ENCODE measurements at regions of chr10 and their contacts with region 1.

Region 1: GRCh38 chr10:30420266-30420665 is 13.7 kb upstream of the MAP3K8 start:
- DNase-seq: no peak
- ATAC-seq: no peak
- H3K4me3 ChIP-seq: no peak overlapping the region
- H3K4me3 Mint-ChIP-seq: no peak overlapping the region
- H3K27ac ChIP-seq: no peak overlapping the region
- H3K27ac Mint-ChIP-seq: no peak overlapping the region
- H3K4me1 ChIP-seq: peaks cover 7% of the 10 kb centered on the region in 2 experiments
- H3K4me1 Mint-ChIP-seq: peaks cover 20 to 33% (median 22%) of the 10 kb centered on the region in 3 donors
- H3K27me3 ChIP-seq: no peaks in the 10 kb centered on the region
- H3K27me3 Mint-ChIP-seq: no peaks in the 10 kb centered on the region

Region 2: DNA sequence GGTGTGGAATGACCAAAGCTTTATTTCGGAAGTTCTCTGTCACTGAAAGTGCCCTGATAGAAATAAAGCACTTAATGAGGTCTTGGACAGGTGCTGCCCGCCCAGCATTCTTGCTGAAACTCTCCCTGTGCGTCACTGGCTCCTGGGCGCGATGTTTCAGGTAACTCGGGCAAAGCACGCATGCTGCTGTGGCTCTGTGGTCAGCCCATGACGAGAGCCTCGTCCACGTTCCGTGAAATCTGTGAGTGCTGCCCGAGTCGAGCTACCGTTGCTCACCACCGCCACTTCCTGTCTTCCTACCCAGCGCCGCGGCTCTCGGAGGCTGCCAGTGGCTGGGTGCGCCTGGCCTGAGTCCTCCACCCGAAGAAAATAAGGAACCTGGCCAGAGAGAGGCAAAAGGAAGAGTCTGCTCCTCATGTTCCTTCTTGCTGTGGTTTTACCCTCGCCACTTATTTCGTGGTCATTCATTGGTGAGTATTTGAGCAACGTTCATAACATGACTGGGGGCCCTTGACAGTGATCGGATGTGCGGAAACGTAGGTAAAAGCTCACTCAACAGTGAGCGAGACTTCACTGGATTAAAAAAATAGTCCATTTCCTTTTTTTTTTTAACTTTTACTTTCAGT is 109.2 kb after region 1 on chr10:
- CTCF ChIA-PET with region 1: interaction called, 3 to 19 read pairs
- POLR2A ChIA-PET with region 1: interaction called, 4 read pairs
- DNase-seq: peak; percentile 65 to 88 (median 77)
- ATAC-seq: peak; percentile 83 to 89 (median 86)
- H3K4me3 ChIP-seq: peak overlapping the region; percentile 58 to 78
- H3K4me3 Mint-ChIP-seq: peak overlapping the region; percentile 82 to 85 (median 84)
- H3K27ac ChIP-seq: peak overlapping the region; percentile 98
- H3K27ac Mint-ChIP-seq: peak overlapping the region; percentile 97 to 99
- H3K4me1 ChIP-seq: peaks cover 26 to 79% of the 10 kb centered on the region in 2 experiments
- H3K4me1 Mint-ChIP-seq: peaks cover 61 to 76% (median 64%) of the 10 kb centered on the region in 3 donors
- H3K27me3 ChIP-seq: no peaks in the 10 kb centered on the region
- H3K27me3 Mint-ChIP-seq: peaks cover 0 to under 1% of the 10 kb centered on the region in 2 donors

Measured in T-cell (primary cell).